Posterior vena cava (tissue), 2 donors: ENCODE measurements at regions of chr10 and their contacts with region 1.

Region 1: DNA sequence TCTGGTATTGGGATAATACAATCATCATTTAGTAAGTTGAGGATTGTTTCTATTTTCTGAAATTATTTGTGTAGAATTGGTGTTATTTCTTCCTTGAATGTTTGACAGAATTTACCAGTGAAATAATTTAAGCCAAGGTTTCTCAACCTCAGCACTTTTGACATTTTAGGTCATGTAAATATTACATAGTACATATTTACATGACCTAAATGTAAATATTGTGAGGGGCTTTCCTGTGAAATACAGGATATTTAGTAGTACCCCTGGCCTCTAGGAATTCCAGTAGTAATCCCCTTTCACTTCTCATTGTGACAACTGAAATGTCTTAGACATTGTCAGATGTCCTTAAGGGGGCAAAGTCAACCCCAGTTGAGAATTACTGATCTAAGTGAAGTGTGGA is 59.8 kb downstream of the TBC1D12 start:
- DNase-seq: no peak

Region 2: DNA sequence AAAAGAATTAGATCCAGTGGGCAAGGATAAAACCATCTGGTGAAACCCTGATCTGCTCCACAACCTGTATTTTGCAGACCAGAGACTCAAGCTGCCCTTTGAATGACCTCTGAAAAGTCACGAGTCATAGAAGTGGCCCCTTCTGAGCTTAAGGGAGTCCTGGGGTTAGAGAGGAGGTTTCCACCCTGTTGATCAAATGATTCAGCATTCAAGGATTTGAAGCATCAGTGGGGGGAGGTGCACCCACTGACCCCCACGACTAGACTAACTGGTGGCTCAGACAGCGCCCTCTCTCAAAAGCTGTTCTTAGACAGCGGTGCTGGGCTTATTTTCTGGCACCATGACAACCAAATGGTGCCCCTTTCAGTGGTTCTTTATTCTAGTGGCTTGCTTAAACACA is 424.1 kb before region 1 on chr10:
- intact Hi-C with region 1: loop called in 1 of 2 experiments (anchors 10 kb)
- DNase-seq: no peak

Region 3: DNA sequence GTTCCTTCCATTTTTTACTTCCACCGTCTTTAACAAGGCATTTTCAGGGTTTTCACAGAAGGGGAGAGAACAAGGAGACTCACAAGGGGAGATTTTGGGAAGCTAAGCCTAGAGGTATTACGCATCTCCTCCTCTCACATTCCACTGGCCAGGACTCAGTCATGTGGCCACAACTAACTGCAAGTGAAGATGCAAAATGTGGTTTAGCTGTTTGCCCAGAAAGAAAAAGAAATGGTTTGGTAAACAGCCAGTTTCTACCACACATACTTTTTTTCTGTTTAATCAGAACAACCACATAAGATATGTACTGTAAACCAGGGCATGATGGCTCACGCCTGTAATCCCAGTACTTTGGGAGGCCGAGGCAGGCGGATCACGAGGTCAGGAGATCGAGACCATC is 62.0 kb after region 1 on chr10:
- intact Hi-C with region 1: no loop called
- DNase-seq: no peak